Mammary epithelial cell (primary cell): ENCODE measurements at regions of chr12 and their contacts with region 1.

Region 1: GRCh38 chr12:19915392-19916195 is 452.7 kb upstream of the PDE3A start:
- DNase-seq: no peak
- H3K4me3 ChIP-seq: no peak overlapping the region
- H3K27ac ChIP-seq: no peak overlapping the region
- H3K4me1 ChIP-seq: no peaks in the 10 kb centered on the region
- H3K27me3 ChIP-seq: no peaks in the 10 kb centered on the region
- CTCF ChIP-seq: peak; percentile 53 to 54

Region 2: GRCh38 chr12:19771858-19772257 is 143.7 kb before region 1 on chr12:
- CTCF ChIA-PET with region 1: no interaction called
- dilution Hi-C with region 1: no loop called
- in situ Hi-C with region 1: no loop called
- intact Hi-C with region 1: no loop called
- DNase-seq: no peak
- H3K4me3 ChIP-seq: no peak overlapping the region
- H3K27ac ChIP-seq: no peak overlapping the region
- H3K4me1 ChIP-seq: no peaks in the 10 kb centered on the region
- H3K27me3 ChIP-seq: no peaks in the 10 kb centered on the region
- CTCF ChIP-seq: no peak

Region 3: GRCh38 chr12:20404576-20405346 is 489.2 kb after region 1 on chr12:
- CTCF ChIA-PET with region 1: interaction called, 10 read pairs
- dilution Hi-C with region 1: no loop called
- in situ Hi-C with region 1: no loop called
- intact Hi-C with region 1: no loop called
- DNase-seq: no peak
- H3K4me3 ChIP-seq: no peak overlapping the region
- H3K27ac ChIP-seq: no peak overlapping the region
- H3K4me1 ChIP-seq: no peaks in the 10 kb centered on the region
- H3K27me3 ChIP-seq: peaks cover 3% of the 10 kb centered on the region
- CTCF ChIP-seq: no peak